ENCODE measurements at regions of chr18 and their contacts with region 1.

Region 1: DNA sequence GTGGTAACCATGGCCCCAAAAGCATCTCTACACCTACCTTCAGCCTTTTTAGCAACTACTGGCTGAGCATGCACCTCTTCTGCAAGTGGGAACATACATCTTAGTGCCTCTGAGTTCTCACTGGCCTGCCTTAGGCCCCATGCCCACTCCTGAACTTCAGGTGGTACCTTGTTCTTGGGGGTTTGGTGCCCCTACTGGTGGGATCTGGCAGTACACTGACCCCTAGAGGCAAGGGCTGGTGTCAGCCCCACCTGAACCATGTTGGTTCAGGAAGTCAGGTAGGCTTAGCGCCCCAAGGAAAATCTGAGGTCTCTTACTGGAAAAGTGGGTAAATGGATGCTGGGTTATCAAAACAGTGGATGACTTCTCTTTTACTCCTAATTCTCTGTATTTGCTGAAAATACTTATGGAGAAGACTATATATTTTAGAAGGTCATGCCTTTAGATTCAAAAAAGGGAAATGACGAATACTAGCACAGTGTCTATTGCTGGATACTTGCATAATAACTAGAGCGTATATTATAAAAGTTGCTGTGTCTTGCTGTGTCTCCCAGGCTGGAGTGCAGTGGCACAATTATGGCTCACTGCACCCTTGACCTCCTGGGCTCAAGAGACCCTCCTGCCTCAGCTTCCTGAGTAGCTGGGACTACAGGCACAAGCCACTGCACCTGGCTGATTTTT is 84.6 kb downstream of the RAB31 start:
- DNase-seq: no peak
- ATAC-seq: peak; percentile 56
- H3K4me3 Mint-ChIP-seq: no peak overlapping the region
- H3K27ac Mint-ChIP-seq: no peak overlapping the region
- H3K4me1 Mint-ChIP-seq: no peaks in the 10 kb centered on the region
- H3K27me3 Mint-ChIP-seq: no peaks in the 10 kb centered on the region
- CTCF ChIP-seq: no peak

Region 2: DNA sequence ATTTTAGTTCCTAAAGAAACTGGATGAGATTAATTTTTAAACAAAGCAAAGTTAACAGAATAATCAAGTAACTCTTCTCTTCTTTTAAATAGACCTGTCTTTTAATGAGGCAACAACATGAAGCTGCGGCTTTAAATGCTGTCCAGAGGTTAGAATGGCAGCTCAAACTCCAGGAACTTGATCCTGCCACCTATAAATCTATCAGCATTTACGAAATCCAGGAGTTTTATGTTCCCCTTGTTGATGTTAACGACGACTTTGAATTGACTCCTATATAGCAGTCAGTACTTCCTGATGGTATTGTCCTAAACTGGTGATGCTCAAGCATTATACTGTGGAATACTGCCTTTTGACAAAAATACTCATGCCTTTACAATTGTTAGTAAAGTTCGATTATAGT is 511.9 kb before region 1 on chr18:
- CTCF ChIA-PET with region 1: no interaction called
- POLR2A ChIA-PET with region 1: interaction called, 12 read pairs
- intact Hi-C with region 1: no loop called
- DNase-seq: no peak
- ATAC-seq: no peak
- H3K4me3 Mint-ChIP-seq: no peak overlapping the region
- H3K27ac Mint-ChIP-seq: no peak overlapping the region
- H3K4me1 Mint-ChIP-seq: no peaks in the 10 kb centered on the region
- H3K27me3 Mint-ChIP-seq: no peaks in the 10 kb centered on the region
- CTCF ChIP-seq: no peak

Region 3: GRCh38 chr18:9665314-9665713 is 127.4 kb before region 1 on chr18:
- CTCF ChIA-PET with region 1: no interaction called
- POLR2A ChIA-PET with region 1: no interaction called
- intact Hi-C with region 1: no loop called
- DNase-seq: no peak
- ATAC-seq: no peak
- H3K4me3 Mint-ChIP-seq: no peak overlapping the region
- H3K27ac Mint-ChIP-seq: no peak overlapping the region
- H3K4me1 Mint-ChIP-seq: no peaks in the 10 kb centered on the region
- H3K27me3 Mint-ChIP-seq: no peaks in the 10 kb centered on the region
- CTCF ChIP-seq: no peak